ENCODE measurements at regions of chr17 and their contacts with region 1.

Region 1: GRCh38 chr17:35764123-35764991 is 3.7 kb downstream of the C17orf50 start:
- DNase-seq: peak; percentile 93
- ATAC-seq: peak; percentile 95
- H3K4me3 Mint-ChIP-seq: peak overlapping the region; percentile 80
- H3K27ac Mint-ChIP-seq: peak overlapping the region; percentile 70
- H3K4me1 Mint-ChIP-seq: peaks cover 9% of the 10 kb centered on the region
- H3K27me3 Mint-ChIP-seq: no peaks in the 10 kb centered on the region

Region 2: GRCh38 chr17:35747540-35748017 is 16.8 kb before region 1 on chr17:
- CTCF ChIA-PET with region 1: interaction called, 10 read pairs
- POLR2A ChIA-PET with region 1: no interaction called
- intact Hi-C with region 1: no loop called
- DNase-seq: peak; percentile 90
- ATAC-seq: peak; percentile 91
- H3K4me3 Mint-ChIP-seq: no peak overlapping the region
- H3K27ac Mint-ChIP-seq: no peak overlapping the region
- H3K4me1 Mint-ChIP-seq: peaks cover 23% of the 10 kb centered on the region
- H3K27me3 Mint-ChIP-seq: peaks cover 33% of the 10 kb centered on the region

Region 3: GRCh38 chr17:35780951-35781350 is 16.6 kb after region 1 on chr17:
- CTCF ChIA-PET with region 1: interaction called, 18 read pairs
- POLR2A ChIA-PET with region 1: no interaction called
- intact Hi-C with region 1: loop called in 1 of 2 experiments (anchors 2 kb)
- DNase-seq: no peak
- ATAC-seq: no peak
- H3K4me3 Mint-ChIP-seq: no peak overlapping the region
- H3K27ac Mint-ChIP-seq: no peak overlapping the region
- H3K4me1 Mint-ChIP-seq: no peaks in the 10 kb centered on the region
- H3K27me3 Mint-ChIP-seq: peaks cover 3% of the 10 kb centered on the region

Region 4: DNA sequence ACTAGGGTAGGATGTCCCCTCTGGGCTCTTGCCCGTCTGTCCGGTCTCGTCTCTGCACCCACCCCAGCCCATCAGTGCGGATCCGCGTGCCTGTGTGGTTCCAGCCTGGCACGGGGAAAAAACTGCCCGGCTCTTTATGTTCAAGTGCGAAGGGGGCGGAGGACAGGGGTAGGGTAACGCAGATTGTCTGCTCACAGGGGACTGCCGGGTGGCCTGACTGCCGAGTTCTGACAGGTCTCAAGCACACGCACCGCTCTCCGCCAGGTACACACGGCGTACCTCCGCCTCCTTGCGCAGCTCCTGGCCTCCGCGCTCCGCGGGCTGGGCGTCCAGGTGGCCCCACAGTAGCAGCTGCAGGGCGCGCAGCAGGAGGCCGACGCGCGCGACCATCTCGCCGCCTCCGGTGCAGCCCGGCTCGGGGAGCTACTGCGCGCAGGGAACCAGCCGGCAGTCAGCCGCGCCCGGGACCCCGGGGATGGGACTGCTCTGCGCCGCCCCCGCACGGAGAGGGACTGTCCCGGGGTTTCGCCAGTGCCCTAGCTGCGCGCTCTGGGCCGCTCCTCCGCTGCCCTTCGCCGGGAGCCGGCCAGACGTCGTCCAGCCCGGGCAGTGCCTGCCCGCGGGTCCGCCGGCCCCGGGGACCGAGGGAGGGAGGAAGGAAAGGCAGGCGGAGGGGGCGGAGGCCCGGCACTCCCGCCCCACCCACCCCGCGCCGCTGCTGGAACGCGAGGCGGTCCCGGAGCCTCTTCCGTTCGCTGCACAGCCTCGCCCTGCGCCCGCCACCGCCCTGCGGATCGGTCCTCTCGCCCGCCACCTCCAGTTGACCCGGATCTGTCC is 30.8 kb after region 1 on chr17 and contains the start of gene MMP28:
- CTCF ChIA-PET with region 1: interaction called, 38 read pairs
- POLR2A ChIA-PET with region 1: interaction called, 3 read pairs
- intact Hi-C with region 1: no loop called
- DNase-seq: peak; percentile 70
- ATAC-seq: peak; percentile 81
- H3K4me3 Mint-ChIP-seq: peak within 1 kb of the TSS; percentile 67
- H3K27ac Mint-ChIP-seq: peak within 1 kb of the TSS; percentile 3
- H3K4me1 Mint-ChIP-seq: peaks cover 20% of the 10 kb centered on the region
- H3K27me3 Mint-ChIP-seq: peaks cover 26% of the 10 kb centered on the region
- total RNA-seq, gene MMP28: 0.09 TPM in 1 of 2 experiments, not detected in the other

Region 5: DNA sequence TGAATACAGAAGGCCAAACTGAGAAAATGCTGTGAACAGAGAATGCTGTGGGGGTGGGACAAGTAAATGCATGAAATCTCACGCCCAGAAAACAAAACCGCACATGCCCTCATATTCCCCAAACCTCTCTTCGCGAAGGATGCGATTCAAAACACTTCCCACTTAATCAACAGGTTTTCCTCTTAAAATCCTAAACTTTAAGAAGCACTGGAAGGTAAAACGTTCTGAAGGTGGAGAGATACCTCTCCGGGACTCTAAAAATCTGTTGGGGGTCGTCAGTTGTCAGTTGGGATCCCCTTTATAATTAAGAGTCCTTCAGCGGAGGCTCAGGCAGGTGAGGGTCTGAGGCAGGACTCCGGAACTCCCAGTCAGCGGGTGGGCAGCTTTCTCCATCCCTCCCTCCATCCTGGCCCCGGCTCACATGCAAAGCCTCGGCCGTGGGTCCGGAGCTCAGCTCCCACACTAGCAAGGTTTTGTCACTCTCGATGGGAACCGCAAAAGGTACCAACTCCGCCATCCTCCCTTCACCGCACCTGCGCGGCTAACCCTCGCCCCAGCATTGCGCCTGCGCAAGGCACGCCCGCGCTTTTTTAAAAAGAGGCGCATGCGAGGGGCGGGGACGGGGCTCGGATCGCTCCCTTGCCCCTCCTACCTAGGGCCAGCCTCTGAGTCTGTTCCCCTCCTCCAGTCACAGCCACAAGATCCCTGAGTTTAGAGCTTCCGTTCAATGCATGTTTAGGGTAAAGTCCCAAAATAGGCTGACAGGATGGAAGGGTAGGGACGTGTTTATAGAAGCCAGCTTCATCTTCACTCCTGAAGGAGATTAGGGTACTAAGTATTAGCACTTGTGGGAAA is 166.1 kb after region 1 on chr17 and contains the start of gene RDM1:
- CTCF ChIA-PET with region 1: no interaction called
- POLR2A ChIA-PET with region 1: no interaction called
- intact Hi-C with region 1: loop called in 1 of 2 experiments (anchors 1 kb)
- DNase-seq: peak; percentile 95
- ATAC-seq: peak; percentile 100
- H3K4me3 Mint-ChIP-seq: peak within 1 kb of the TSS; percentile 80
- H3K27ac Mint-ChIP-seq: peak within 1 kb of the TSS; percentile 62
- H3K4me1 Mint-ChIP-seq: peaks cover 22% of the 10 kb centered on the region
- H3K27me3 Mint-ChIP-seq: no peaks in the 10 kb centered on the region
- total RNA-seq, gene RDM1: 4.4 to 6.5 TPM